Activated T-helper 1 cell treated with anti-CD3 and anti-CD28 coated beads, Interleukin-12 subunit alpha, Interleukin-12 subunit beta, Interleukin-2, Interleukin-4 antibody, amounts not matched to agents 30 ng/mL and 10 ng/mL and 1 ng/mL, durations not matched to agents 14 hours and 24 hours and 36 hours (primary cell): ENCODE measurements at regions of chr9 and their contacts with region 1.

Region 1: DNA sequence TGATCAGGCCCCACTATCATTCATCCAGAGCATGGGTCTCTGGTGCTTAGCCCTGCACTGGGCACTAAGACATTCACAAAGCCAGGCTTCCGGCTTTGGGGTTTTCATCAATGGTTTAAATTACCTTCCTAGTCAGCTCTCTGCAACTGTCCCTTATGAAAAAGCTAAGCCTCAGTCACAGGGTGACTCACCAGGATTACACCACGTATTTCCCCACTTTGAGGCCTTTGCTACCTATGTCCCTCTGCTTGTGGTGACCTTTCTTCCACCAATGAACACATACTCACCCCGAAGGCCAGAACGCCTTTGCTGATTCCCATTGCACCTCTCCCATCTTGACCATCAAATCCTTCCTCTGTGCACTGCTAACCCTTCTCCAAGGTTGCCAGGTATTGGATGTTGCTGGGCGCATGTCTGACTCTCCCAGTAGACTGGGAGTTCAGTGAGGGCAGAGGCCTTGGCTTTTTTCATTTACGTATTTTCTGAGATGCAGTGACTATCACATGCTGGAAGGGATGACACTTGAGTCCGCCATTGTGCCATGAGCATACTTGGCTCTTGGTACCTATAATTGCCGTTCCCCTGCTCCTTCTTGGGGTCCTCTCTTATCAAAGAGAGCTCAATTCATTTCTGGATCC is 58.7 kb upstream of the TNFSF8 start:
- DNase-seq: peak; percentile 47
- H3K4me3 Mint-ChIP-seq: peak overlapping the region; percentile 37
- H3K27ac Mint-ChIP-seq: peak overlapping the region; percentile 95
- H3K4me1 Mint-ChIP-seq: peaks cover 87% of the 10 kb centered on the region
- H3K27me3 Mint-ChIP-seq: no peaks in the 10 kb centered on the region

Region 2: DNA sequence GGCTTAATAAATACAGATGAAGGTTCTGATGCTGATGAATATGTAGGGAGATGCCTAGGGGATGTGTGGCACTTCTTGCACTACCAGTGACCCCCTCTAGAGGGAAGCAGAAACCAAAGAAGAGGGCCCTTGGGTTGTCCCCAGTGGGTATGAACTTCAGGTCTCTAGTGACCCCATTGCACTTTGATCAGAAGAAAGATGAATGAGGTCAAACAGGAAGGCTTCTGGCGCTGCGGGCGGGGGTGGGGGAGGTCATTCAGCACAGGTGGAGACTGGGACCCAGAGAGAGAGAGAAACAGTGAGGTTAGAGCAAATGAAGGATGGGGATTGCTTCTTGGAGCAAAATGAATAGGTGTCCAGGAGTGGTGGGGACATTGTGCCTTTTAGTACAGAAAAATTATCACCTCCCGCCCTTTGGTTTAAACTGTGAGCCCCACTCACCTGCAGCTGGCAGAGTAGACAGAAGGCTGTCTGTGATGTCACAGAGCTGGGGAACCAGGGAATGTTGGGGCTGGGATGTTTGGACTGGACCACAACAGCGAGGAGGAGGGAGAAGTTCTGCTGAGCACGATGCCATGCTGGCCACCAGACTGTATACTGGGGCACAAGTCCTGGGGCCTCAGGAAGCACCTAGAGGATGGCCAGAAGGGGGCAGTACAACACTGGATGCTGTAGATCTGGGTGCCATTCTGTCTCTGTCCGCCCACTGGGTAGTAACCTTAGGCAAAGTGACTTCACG is 307.3 kb before region 1 on chr9 and contains the start of gene TEX48:
- intact Hi-C with region 1: loop called (anchors 1 kb)
- DNase-seq: peak; percentile 76
- H3K4me3 Mint-ChIP-seq: peak within 1 kb of the TSS; percentile 49
- H3K27ac Mint-ChIP-seq: peak within 1 kb of the TSS; percentile 97
- H3K4me1 Mint-ChIP-seq: peaks cover 81% of the 10 kb centered on the region
- H3K27me3 Mint-ChIP-seq: no peaks in the 10 kb centered on the region
- total RNA-seq, gene TEX48: 1.0 and 1.2 TPM in 2 replicates

Region 3: GRCh38 chr9:114696814-114697544 is 292.1 kb before region 1 on chr9:
- intact Hi-C with region 1: loop called (anchors 1 kb)
- DNase-seq: peak; percentile 80
- H3K4me3 Mint-ChIP-seq: peak overlapping the region; percentile 46
- H3K27ac Mint-ChIP-seq: peak overlapping the region; percentile 95
- H3K4me1 Mint-ChIP-seq: peaks cover 92% of the 10 kb centered on the region
- H3K27me3 Mint-ChIP-seq: no peaks in the 10 kb centered on the region

Region 4: GRCh38 chr9:114754581-114754980 is 234.5 kb before region 1 on chr9:
- intact Hi-C with region 1: no loop called
- DNase-seq: no peak
- H3K4me3 Mint-ChIP-seq: no peak overlapping the region
- H3K27ac Mint-ChIP-seq: no peak overlapping the region
- H3K4me1 Mint-ChIP-seq: peaks cover 26% of the 10 kb centered on the region
- H3K27me3 Mint-ChIP-seq: no peaks in the 10 kb centered on the region

Region 5: GRCh38 chr9:114894801-114895433 is 94.2 kb before region 1 on chr9:
- intact Hi-C with region 1: loop called (anchors 1 kb)
- DNase-seq: peak; percentile 54
- H3K4me3 Mint-ChIP-seq: peak overlapping the region; percentile 16
- H3K27ac Mint-ChIP-seq: peak overlapping the region; percentile 90
- H3K4me1 Mint-ChIP-seq: peaks cover 57% of the 10 kb centered on the region
- H3K27me3 Mint-ChIP-seq: no peaks in the 10 kb centered on the region

Region 6: GRCh38 chr9:114930056-114930812 is 58.8 kb before region 1 on chr9 and contains the start of gene TNFSF8:
- intact Hi-C with region 1: loop called (anchors 1 kb)
- DNase-seq: peak; percentile 73
- H3K4me3 Mint-ChIP-seq: peak within 1 kb of the TSS; percentile 98
- H3K27ac Mint-ChIP-seq: peak within 1 kb of the TSS; percentile 99
- H3K4me1 Mint-ChIP-seq: peaks cover 62% of the 10 kb centered on the region
- H3K27me3 Mint-ChIP-seq: no peaks in the 10 kb centered on the region
- total RNA-seq, gene TNFSF8: 200 and 207 TPM in 2 replicates

Region 7: GRCh38 chr9:115000217-115000639 is 11.1 kb after region 1 on chr9:
- intact Hi-C with region 1: loop called (anchors 1 kb)
- DNase-seq: no peak
- H3K4me3 Mint-ChIP-seq: peak overlapping the region; percentile 12
- H3K27ac Mint-ChIP-seq: peak overlapping the region; percentile 58
- H3K4me1 Mint-ChIP-seq: peaks cover 49% of the 10 kb centered on the region
- H3K27me3 Mint-ChIP-seq: no peaks in the 10 kb centered on the region

Region 8: GRCh38 chr9:115042781-115043509 is 53.9 kb after region 1 on chr9:
- intact Hi-C with region 1: loop called (anchors 5 kb)
- DNase-seq: peak; percentile 7
- H3K4me3 Mint-ChIP-seq: peak overlapping the region; percentile 1
- H3K27ac Mint-ChIP-seq: peak overlapping the region; percentile 78
- H3K4me1 Mint-ChIP-seq: peaks cover 47% of the 10 kb centered on the region
- H3K27me3 Mint-ChIP-seq: peaks cover 17% of the 10 kb centered on the region